Activated T-helper 2 cell treated with anti-CD3 and anti-CD28 coated beads, Interferon-gamma antibody, Interleukin-2, Interleukin-4, amounts not matched to agents 10 μg/mL and 5 μg/mL and 100 μg/mL, durations not matched to agents 14 hours and 24 hours and 36 hours (primary cell): ENCODE measurements at regions of chr2 and their contacts with region 1.

Region 1: DNA sequence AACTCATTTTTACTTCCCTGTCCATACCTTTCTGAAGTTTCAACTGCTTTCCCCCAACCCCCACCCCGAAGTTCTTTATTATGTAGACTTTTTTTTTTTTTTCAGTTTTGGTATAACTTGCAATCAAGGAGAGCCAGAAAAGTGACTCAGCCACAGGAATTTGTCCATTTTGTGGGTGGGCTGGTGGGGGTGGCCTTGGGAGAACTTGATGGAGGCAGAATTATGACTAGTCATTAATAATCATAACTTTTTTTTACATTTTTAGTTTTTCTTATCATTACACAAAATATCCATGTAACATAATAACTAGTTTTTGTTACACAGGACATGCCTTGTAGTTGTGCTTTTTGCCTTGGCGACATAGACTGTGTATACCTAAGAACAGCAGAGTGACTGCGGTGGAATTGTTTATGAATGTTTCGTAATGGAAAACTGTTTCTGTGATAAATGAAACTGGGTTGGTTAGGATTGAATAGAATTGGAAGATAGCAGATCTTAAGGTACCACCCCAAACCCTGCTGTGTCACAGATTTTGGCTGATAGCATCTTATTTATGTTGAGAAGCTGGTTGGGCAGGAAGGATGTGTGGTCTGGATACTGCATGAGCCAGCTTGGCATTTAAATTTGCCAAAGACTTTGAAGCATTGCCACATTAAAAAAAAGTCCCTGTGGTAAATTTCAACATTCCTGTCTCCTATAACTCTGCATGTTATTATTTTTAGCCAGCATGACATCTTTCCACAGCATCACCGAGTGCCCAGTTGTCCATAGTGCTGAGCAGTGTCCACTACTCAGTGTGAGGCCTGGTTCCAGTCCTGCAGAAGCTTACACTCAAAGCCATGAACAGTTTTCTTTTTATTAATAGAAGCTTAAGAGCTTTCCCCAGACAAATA is 30.7 kb downstream of the LYPD6B start:
- DNase-seq: peak; percentile 43
- H3K4me3 Mint-ChIP-seq: peak overlapping the region; percentile 37
- H3K27ac Mint-ChIP-seq: peak overlapping the region; percentile 79
- H3K4me1 Mint-ChIP-seq: peaks cover 19% of the 10 kb centered on the region
- H3K27me3 Mint-ChIP-seq: peaks cover 27% of the 10 kb centered on the region

Region 2: DNA sequence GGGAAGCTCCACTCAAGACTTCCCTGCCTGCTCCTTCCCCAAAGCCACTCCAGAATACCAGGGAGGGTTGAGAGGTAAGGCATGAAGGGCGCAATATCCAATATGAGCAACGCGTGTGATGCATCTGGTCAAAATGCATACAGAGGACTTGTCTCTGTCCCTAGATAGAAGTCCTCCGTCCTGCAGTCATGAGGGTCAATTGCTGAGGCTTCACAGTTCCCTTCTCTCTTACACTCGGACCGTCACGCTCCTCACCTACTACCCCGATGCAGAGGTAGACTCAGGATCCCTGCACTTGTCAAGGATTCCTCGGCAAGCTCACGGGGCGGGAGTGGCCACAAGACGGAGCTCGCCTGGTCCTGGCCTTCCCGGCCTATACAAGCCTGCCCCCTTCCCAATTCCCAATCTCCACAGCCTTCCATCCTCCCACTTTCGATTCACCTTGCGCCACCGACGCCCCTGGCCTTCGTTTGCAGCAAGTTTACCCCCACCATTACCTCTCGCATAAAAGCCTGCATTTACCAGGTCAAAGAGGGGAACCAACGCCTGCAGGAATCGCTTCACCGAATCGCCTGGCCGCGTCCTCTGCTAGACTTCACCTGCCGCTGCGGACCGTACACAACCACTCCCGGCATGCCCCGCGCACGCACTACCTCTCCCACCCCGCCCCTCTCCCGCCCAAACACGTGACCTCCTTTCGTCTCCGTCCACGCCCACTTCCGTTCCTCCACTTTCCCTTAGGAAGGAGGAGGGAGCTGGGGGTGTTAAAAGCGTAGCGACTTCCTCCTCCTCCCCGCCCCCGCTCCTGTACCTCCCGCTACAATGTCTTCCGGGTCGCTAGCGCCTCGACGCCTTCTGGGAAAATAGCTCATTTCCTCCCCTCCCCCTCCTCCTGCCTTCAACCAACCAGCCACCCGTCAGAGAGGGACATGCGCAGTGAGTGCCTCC is 1048.9 kb before region 1 on chr2 and contains the start of gene ORC4:
- intact Hi-C with region 1: loop called (anchors 5 kb)
- DNase-seq: peak; percentile 94
- H3K4me3 Mint-ChIP-seq: peak within 1 kb of the TSS; percentile 100
- H3K27ac Mint-ChIP-seq: peak within 1 kb of the TSS; percentile 93
- H3K4me1 Mint-ChIP-seq: peaks cover 44% of the 10 kb centered on the region
- H3K27me3 Mint-ChIP-seq: no peaks in the 10 kb centered on the region
- total RNA-seq, gene ORC4: 25.4 and 31.2 TPM in 2 replicates

Region 3: GRCh38 chr2:148813603-148814065 is 255.6 kb before region 1 on chr2:
- intact Hi-C with region 1: loop called (anchors 1 kb)
- DNase-seq: peak; percentile 41
- H3K4me3 Mint-ChIP-seq: no peak overlapping the region
- H3K27ac Mint-ChIP-seq: peak overlapping the region; percentile 8
- H3K4me1 Mint-ChIP-seq: peaks cover 20% of the 10 kb centered on the region
- H3K27me3 Mint-ChIP-seq: peaks cover 16% of the 10 kb centered on the region

Region 4: DNA sequence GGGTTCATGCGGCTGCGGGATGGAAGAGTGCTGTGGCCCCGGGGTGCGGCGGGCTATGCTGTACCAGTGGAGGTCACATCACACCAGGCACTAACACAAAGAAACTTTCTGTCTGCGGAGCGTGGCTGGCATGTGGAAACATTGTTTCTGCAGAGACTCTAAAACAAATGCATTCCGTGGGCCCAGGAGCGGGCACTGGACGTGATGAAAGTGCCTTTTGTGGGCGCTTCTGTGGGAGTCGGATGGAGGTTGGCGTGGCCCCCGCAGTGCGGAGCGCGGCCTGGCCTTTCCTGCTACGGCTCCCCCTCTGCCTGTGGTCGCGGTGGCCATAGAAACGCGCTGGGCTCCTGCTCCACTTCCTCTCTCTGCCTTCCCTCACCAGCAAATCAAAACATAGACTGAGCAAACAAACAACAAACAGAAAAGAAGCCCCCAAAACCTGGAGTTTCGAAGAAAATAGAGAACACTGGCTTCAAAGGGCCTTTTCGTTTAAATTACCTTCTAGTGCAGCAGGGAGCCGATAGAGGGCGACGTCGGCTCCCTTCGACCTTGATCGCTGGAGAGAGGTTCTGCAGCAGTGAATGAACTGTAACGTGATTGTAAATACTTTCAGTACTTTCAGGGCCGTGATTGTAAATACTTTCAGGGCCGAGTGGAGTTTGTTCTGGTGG is 142.8 kb before region 1 on chr2:
- intact Hi-C with region 1: loop called (anchors 10 kb)
- DNase-seq: peak; percentile 51
- H3K4me3 Mint-ChIP-seq: peak overlapping the region; percentile 82
- H3K27ac Mint-ChIP-seq: peak overlapping the region; percentile 83
- H3K4me1 Mint-ChIP-seq: peaks cover 27% of the 10 kb centered on the region
- H3K27me3 Mint-ChIP-seq: no peaks in the 10 kb centered on the region

Region 5: DNA sequence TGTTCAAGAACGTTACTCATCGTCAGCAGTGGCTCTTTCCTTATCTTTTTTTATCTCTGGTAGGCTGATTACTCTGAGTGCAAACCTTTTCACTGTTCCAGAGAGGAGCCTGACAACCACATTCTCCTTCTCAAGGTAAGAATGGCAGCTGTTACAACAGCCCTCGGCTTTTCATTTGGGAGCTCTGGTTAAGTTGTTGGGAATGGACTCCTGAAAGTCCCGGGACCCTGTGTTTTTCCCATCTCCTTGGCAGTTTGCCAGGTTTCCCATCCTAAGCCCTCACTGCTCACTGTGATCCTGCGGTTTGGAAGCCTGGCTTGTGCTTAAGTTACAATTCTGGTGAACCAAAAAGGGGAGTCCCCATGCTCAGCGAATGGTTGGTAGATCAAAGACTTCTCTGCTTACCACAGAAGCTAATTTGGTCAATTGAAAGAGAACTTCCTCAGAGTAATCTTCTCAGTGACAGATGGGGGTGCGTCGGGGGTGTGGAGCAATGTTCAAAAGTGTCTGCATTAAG is 91.5 kb after region 1 on chr2:
- intact Hi-C with region 1: loop called (anchors 2 kb)
- DNase-seq: no peak
- H3K4me3 Mint-ChIP-seq: no peak overlapping the region
- H3K27ac Mint-ChIP-seq: no peak overlapping the region
- H3K4me1 Mint-ChIP-seq: peaks cover 13% of the 10 kb centered on the region
- H3K27me3 Mint-ChIP-seq: peaks cover 32% of the 10 kb centered on the region

Region 6: DNA sequence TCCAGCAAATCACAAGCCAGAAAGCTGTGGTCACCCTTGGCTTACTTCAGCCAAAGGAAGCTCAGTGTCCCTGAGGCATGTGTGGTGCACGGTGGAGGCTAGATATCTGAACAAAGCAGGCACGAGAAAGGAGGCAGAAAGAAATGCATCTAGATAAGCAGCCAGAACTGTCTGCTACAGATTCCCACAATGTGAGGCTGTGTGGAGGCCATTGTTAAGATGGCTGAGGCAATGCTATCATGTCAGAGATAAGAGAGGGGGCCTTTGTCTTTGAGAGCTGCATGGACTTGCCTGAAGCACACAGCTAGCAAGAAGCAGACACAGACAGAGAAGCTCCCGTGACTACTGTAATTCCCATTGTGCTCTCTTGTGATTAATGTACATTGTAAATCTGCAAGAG is 150.6 kb after region 1 on chr2:
- intact Hi-C with region 1: no loop called
- DNase-seq: no peak
- H3K4me3 Mint-ChIP-seq: no peak overlapping the region
- H3K27ac Mint-ChIP-seq: no peak overlapping the region
- H3K4me1 Mint-ChIP-seq: no peaks in the 10 kb centered on the region
- H3K27me3 Mint-ChIP-seq: no peaks in the 10 kb centered on the region

Region 7: GRCh38 chr2:149463328-149464002 is 394.2 kb after region 1 on chr2:
- intact Hi-C with region 1: loop called (anchors 2 kb)
- DNase-seq: no peak
- H3K4me3 Mint-ChIP-seq: no peak overlapping the region
- H3K27ac Mint-ChIP-seq: no peak overlapping the region
- H3K4me1 Mint-ChIP-seq: no peaks in the 10 kb centered on the region
- H3K27me3 Mint-ChIP-seq: peaks cover 2% of the 10 kb centered on the region

Region 8: DNA sequence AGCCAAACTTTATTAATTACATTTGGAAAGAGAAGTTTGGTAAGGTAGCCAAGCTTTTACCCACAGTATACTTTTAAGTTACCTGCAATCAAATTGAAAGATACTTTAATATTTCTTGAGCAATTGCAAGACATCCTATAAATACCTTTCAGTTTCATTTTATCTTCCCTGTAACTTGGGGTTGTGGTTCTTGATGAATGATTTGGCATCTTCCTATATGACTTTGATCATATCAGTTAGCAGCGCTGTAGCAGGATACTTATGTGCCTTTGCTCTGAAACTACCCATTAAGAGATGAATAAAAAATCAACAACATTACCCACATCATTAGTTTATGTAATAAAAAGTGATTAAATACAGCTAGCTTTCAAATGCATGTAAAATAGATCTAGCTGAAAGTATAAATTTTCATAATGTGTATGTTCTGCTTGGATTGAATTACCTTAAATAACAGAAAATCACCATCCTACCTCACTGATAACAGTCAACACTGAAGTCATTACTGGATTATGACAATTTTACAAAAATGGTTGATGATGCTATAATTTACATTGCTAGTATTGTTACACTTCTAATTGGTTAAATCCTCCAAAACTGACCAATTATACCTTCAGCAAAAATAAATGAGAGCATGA is 468.0 kb after region 1 on chr2:
- intact Hi-C with region 1: loop called (anchors 1 kb)
- DNase-seq: no peak
- H3K4me3 Mint-ChIP-seq: no peak overlapping the region
- H3K27ac Mint-ChIP-seq: no peak overlapping the region
- H3K4me1 Mint-ChIP-seq: peaks cover 14% of the 10 kb centered on the region
- H3K27me3 Mint-ChIP-seq: peaks cover 6% of the 10 kb centered on the region